ENCODE measurements at regions of chr13 and their contacts with region 1.

Region 1: GRCh38 chr13:99380921-99381645 is 73.9 kb upstream of the GPR183 start:
- DNase-seq: peak in 4 of 5 donors; percentile 52 to 67 (median 61)
- H3K4me3 ChIP-seq: peak overlapping the region in 1 of 2 donors; percentile 0
- H3K4me3 Mint-ChIP-seq: peak overlapping the region in 7 of 8 donors; percentile 61 to 89 (median 73)
- H3K27ac ChIP-seq: peak overlapping the region; percentile 51
- H3K27ac Mint-ChIP-seq: peak overlapping the region; percentile 92 to 99 (median 96)
- H3K4me1 ChIP-seq: peaks cover 87% of the 10 kb centered on the region
- H3K4me1 Mint-ChIP-seq: peaks cover 70 to 97% (median 87%) of the 10 kb centered on the region in 4 donors
- H3K27me3 ChIP-seq: no peaks in the 10 kb centered on the region
- H3K27me3 Mint-ChIP-seq: no peaks in the 10 kb centered on the region

Region 2: DNA sequence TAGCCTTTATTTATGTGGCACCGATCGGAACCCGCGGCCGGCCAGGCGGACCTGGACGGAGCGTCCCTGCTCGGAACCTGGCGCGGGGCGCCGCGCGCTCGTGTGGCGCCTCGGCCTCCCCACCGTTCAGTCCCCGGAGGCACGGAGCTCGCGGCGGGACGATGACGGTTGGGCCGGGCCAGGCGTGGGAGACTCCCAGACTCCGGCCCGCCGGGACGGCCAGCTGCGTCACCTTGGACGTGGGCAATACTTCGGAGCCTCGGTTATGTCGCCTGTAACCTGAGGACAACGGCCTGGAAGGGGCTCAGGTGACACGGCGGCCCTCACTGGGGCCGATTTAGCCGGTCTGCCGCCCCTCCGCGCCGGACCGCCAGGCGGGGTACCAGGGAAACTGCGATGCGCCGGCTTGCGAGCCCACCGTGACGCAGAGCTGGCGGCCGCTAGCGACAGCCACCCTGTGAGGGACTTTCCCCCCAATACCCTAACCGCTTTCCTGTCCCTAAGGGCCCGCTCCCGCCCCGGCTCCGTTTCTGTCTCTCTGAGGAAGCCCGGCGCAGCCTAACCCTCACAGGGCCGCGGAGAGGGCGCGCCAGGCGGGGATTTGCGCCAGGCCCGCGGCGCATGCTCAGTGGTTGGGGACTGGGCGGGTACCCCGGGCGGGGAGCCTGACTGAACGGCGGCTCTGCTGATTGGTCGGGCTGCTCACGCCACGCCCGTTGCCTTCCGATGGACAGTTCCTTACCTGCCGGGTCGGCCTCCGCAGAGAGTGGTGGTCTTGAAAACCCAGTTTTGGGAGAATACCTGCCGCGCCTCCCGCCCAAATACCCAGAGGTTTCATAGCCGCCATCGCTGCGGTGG is 293.8 kb before region 1 on chr13:
- CTCF ChIA-PET with region 1: no interaction called
- POLR2A ChIA-PET with region 1: no interaction called
- intact Hi-C with region 1: no loop called
- DNase-seq: peak; percentile 91 to 94 (median 92)
- H3K4me3 ChIP-seq: peak overlapping the region; percentile 37 to 88
- H3K4me3 Mint-ChIP-seq: peak overlapping the region; percentile 96 to 99 (median 98)
- H3K27ac ChIP-seq: peak overlapping the region; percentile 83
- H3K27ac Mint-ChIP-seq: peak overlapping the region; percentile 99 to 100 (median 99)
- H3K4me1 ChIP-seq: peaks cover 40% of the 10 kb centered on the region
- H3K4me1 Mint-ChIP-seq: peaks cover 27 to 53% (median 39%) of the 10 kb centered on the region in 4 donors
- H3K27me3 ChIP-seq: no peaks in the 10 kb centered on the region
- H3K27me3 Mint-ChIP-seq: no peaks in the 10 kb centered on the region

Region 3: GRCh38 chr13:99281811-99282263 is 99.2 kb before region 1 on chr13:
- CTCF ChIA-PET with region 1: interaction called, 315 read pairs
- POLR2A ChIA-PET with region 1: interaction called, 22 read pairs
- intact Hi-C with region 1: no loop called
- DNase-seq: peak; percentile 65 to 79 (median 74)
- H3K4me3 ChIP-seq: peak overlapping the region in 1 of 2 donors; percentile 16
- H3K4me3 Mint-ChIP-seq: peak overlapping the region; percentile 67 to 92 (median 82)
- H3K27ac ChIP-seq: peak overlapping the region; percentile 66
- H3K27ac Mint-ChIP-seq: peak overlapping the region; percentile 88 to 100 (median 99)
- H3K4me1 ChIP-seq: peaks cover 96% of the 10 kb centered on the region
- H3K4me1 Mint-ChIP-seq: peaks cover 77 to 99% (median 88%) of the 10 kb centered on the region in 4 donors
- H3K27me3 ChIP-seq: no peaks in the 10 kb centered on the region
- H3K27me3 Mint-ChIP-seq: no peaks in the 10 kb centered on the region

Region 4: DNA sequence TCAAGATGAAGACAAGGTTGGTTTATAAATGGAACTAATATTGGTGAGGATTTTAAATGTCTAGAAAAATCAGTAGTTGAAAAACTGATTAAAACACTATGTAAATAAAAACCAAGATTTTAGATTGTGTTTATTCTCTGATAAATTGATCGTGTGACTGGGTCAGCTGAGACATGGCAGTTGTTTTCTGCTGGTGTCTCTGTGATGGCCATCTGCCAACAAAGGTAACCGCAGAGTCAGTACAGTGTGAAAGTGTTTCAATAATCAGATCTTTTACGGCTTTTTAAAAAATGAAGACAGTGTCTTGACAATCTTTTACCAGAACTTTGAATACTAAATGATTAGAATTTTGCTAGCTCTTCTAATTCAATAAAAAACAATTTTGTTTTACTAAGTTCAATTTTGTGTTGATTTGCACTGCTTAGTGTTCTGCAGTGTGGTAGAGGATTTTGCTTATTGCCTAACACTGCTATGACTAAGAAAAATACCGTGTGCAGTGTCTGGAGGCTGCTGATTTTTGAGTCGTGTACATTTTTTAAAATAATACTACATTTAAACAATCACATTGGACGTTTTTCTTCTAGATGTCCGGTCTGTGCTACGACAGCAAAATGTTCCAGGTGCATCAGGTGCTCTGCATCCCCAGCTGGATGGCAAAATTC is 41.2 kb before region 1 on chr13:
- CTCF ChIA-PET with region 1: interaction called, 3 read pairs
- POLR2A ChIA-PET with region 1: interaction called, 22 read pairs
- intact Hi-C with region 1: no loop called
- DNase-seq: peak; percentile 71 to 86 (median 76)
- H3K4me3 ChIP-seq: peak overlapping the region; percentile 4 to 37
- H3K4me3 Mint-ChIP-seq: peak overlapping the region; percentile 68 to 91 (median 85)
- H3K27ac ChIP-seq: peak overlapping the region; percentile 47
- H3K27ac Mint-ChIP-seq: peak overlapping the region; percentile 76 to 94 (median 91)
- H3K4me1 ChIP-seq: peaks cover 86% of the 10 kb centered on the region
- H3K4me1 Mint-ChIP-seq: peaks cover 71 to 97% (median 83%) of the 10 kb centered on the region in 4 donors
- H3K27me3 ChIP-seq: no peaks in the 10 kb centered on the region
- H3K27me3 Mint-ChIP-seq: no peaks in the 10 kb centered on the region

Region 5: GRCh38 chr13:99419591-99420243 is 38.6 kb after region 1 on chr13:
- CTCF ChIA-PET with region 1: interaction called, 49 read pairs
- POLR2A ChIA-PET with region 1: interaction called, 10 read pairs
- intact Hi-C with region 1: loop called (anchors 2 kb)
- DNase-seq: no peak
- H3K4me3 ChIP-seq: peak overlapping the region in 1 of 2 donors; percentile 27
- H3K4me3 Mint-ChIP-seq: peak overlapping the region; percentile 78 to 96 (median 86)
- H3K27ac ChIP-seq: peak overlapping the region; percentile 41
- H3K27ac Mint-ChIP-seq: peak overlapping the region; percentile 89 to 97 (median 93)
- H3K4me1 ChIP-seq: peaks cover 46% of the 10 kb centered on the region
- H3K4me1 Mint-ChIP-seq: peaks cover 27 to 58% (median 40%) of the 10 kb centered on the region in 4 donors
- H3K27me3 ChIP-seq: no peaks in the 10 kb centered on the region
- H3K27me3 Mint-ChIP-seq: no peaks in the 10 kb centered on the region

Measured in CD4-positive, alpha-beta memory T cell (primary cell).